Common myeloid progenitor, CD34-positive (primary cell): ENCODE measurements at regions of chr10 and their contacts with region 1.

Region 1: DNA sequence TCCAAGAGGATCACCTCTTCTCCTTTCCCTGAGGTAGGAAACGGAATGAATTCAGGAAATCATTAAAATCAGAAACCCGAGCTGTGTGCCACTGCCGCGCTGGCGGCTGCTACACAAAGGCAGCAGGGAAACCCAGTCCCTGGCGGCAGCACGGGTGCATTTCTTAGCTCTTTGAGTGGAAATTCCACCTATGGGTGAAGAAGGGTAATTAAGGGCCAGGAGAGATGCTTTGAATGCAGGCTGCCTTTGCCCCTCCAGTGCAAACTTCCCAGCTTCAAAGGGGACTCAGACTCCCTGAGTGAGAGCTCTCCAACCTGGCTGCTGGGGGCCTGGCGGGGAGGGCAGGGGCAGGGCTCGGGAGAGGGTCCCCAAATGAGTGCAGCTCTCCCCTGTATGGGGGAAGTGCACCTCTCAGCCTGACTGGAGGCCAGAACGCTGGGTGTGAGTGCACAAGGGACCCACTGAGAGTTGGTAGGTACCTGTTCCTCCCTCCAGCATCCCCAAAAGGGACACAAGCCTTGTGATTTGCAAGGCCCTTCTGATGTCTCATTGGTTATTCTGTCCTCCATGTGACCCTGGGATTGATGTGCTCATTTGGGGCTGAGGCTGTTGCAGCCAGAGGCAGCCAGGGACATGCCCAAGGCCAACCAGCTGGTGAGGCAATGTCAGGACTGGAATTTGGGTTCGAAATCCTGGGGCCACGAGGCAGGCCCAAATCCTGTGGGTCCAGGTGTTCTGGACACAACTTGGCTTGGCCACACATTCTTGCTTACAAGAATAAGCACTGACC is 16.3 kb upstream of the ZMIZ1 start:
- DNase-seq: peak; percentile 65 to 84 (median 81)
- H3K4me3 ChIP-seq: no peak overlapping the region
- H3K27ac ChIP-seq: no peak overlapping the region
- H3K4me1 ChIP-seq: peaks cover 3 to 41% (median 22%) of the 10 kb centered on the region in 4 experiments
- H3K27me3 ChIP-seq: no peaks in the 10 kb centered on the region

Region 2: DNA sequence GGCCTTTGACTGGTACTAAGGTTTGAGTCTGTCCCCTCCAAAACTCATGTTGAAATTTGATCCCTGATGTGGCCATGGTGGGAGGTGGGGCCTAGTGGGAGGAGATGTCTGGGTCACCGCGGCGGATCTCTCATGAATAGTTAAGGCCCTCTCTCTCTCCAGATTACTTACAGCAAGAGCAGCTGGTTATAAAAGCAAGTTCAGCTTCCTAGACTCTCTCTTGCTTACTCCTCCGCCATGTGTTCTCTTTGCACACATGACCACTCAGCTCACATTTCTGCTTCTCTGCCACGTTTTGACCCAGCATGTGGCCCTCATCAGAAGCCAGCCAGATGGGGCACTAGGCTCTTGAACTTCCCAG is 13.7 kb before region 1 on chr10:
- CTCF ChIA-PET with region 1: interaction called, 10 read pairs
- POLR2A ChIA-PET with region 1: no interaction called
- DNase-seq: no peak
- H3K4me3 ChIP-seq: no peak overlapping the region
- H3K27ac ChIP-seq: no peak overlapping the region
- H3K4me1 ChIP-seq: no peaks in the 10 kb centered on the region
- H3K27me3 ChIP-seq: no peaks in the 10 kb centered on the region

Region 3: GRCh38 chr10:79067241-79068202 is 15.0 kb after region 1 on chr10:
- CTCF ChIA-PET with region 1: interaction called, 45 read pairs
- POLR2A ChIA-PET with region 1: no interaction called
- DNase-seq: peak; percentile 93 to 98 (median 97)
- H3K4me3 ChIP-seq: peak overlapping the region; percentile 20 to 99 (median 93)
- H3K27ac ChIP-seq: peak overlapping the region in 1 of 2 experiments; percentile 66
- H3K4me1 ChIP-seq: peaks cover 4 to 72% (median 49%) of the 10 kb centered on the region in 4 experiments
- H3K27me3 ChIP-seq: no peaks in the 10 kb centered on the region